Lower leg skin (tissue), 4 donors: ENCODE measurements at regions of chr20 and their contacts with region 1.

Region 1: GRCh38 chr20:9262653-9263194 is 193.8 kb downstream of the PLCB4 start:
- DNase-seq: no peak
- H3K4me3 ChIP-seq: no peak overlapping the region
- CTCF ChIP-seq: no peak
- POLR2A ChIP-seq: no peak

Region 2: GRCh38 chr20:9294053-9294452 is 31.3 kb after region 1 on chr20:
- intact Hi-C with region 1: no loop called
- DNase-seq: no peak
- H3K4me3 ChIP-seq: no peak overlapping the region
- CTCF ChIP-seq: no peak
- POLR2A ChIP-seq: no peak

Region 3: GRCh38 chr20:9319687-9320384 is 57.1 kb after region 1 on chr20:
- intact Hi-C with region 1: loop called (anchors 10 kb)
- DNase-seq: no peak
- H3K4me3 ChIP-seq: no peak overlapping the region
- CTCF ChIP-seq: no peak
- POLR2A ChIP-seq: no peak